A549 (cell line): ENCODE measurements at regions of chr19 and their contacts with region 1.

Region 1: DNA sequence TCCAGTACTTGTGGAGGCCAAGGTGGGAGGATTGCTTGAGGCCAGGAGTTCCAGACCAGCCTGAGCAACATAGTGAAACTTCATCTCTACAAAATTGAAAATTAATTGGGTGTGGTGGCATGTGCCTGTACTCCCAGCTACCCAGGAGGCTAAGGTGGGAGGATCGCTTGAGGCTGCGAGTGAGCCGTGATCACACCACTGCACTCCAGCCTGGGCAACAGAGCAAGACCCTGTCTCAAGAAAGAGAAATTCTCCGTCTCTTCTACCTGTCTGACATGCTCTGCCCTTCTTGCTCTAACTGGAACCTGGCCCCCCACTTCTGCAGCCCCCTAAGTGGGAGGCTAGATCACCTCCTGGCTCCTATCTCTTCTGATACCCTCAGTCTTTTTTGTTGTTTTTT is 7.4 kb downstream of the EIF3K start:
- DNase-seq: no peak
- ATAC-seq: no peak
- H3K4me3 ChIP-seq: no peak overlapping the region
- H3K27ac ChIP-seq: no peak overlapping the region
- H3K4me1 ChIP-seq: peaks cover 23% of the 10 kb centered on the region
- CTCF ChIP-seq: no peak
- EP300 ChIP-seq: no peak
- POLR2A ChIP-seq: no peak
- RAD21 ChIP-seq: no peak

Region 2: GRCh38 chr19:38524369-38524768 is 102.0 kb before region 1 on chr19:
- CTCF ChIA-PET with region 1: no interaction called
- POLR2A ChIA-PET with region 1: no interaction called
- DNase-seq: no peak
- ATAC-seq: peak; percentile 9 to 10; a peak in 1 of 6 replicates
- H3K4me3 ChIP-seq: no peak overlapping the region
- H3K27ac ChIP-seq: no peak overlapping the region
- H3K4me1 ChIP-seq: peaks cover 5% of the 10 kb centered on the region; the same call in 2 of the 3 replicates
- CTCF ChIP-seq: no peak
- EP300 ChIP-seq: no peak
- POLR2A ChIP-seq: no peak
- RAD21 ChIP-seq: no peak

Region 3: DNA sequence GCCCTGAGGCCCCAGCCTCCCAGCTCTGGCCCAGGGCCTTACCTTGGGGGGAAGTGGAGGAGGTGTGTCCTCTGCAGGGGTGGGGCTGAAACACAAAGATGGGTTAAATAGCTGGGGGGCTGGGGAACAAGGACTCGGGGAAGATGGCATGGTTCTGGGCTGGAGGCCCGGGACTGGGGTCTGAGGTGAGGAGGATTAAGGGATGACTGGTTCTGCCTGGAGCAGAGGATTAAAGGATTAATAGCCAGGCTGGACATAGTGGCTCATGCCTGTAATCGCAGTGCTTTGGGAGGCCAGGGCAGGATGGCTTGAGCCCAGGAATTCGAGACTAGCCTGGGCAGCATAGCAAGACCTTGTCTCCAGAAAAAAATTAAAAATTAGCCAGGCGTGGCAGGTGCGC is 20.3 kb before region 1 on chr19:
- CTCF ChIA-PET with region 1: no interaction called
- POLR2A ChIA-PET with region 1: no interaction called
- DNase-seq: no peak
- ATAC-seq: peak; percentile 14 to 29; a peak in 3 of 6 replicates
- H3K4me3 ChIP-seq: no peak overlapping the region
- H3K27ac ChIP-seq: no peak overlapping the region
- H3K4me1 ChIP-seq: no peaks in the 10 kb centered on the region; the same call in 2 of the 3 replicates
- CTCF ChIP-seq: no peak
- EP300 ChIP-seq: no peak
- POLR2A ChIP-seq: no peak
- RAD21 ChIP-seq: no peak

Region 4: GRCh38 chr19:38640368-38640767 is 14.0 kb after region 1 on chr19:
- CTCF ChIA-PET with region 1: interaction called, 134 read pairs
- POLR2A ChIA-PET with region 1: interaction called, 3 read pairs
- DNase-seq: no peak
- ATAC-seq: 0 out of 6 replicates have a peak, but pooled peaks of 1 of the 2 experiments have one; percentile 9
- H3K4me3 ChIP-seq: no peak overlapping the region
- H3K27ac ChIP-seq: peak overlapping the region in 1 of 2 experiments; percentile 56; a peak in 3 of 6 replicates
- H3K4me1 ChIP-seq: peaks cover 47% of the 10 kb centered on the region
- CTCF ChIP-seq: no peak
- EP300 ChIP-seq: no peak
- POLR2A ChIP-seq: no peak
- RAD21 ChIP-seq: no peak

Region 5: DNA sequence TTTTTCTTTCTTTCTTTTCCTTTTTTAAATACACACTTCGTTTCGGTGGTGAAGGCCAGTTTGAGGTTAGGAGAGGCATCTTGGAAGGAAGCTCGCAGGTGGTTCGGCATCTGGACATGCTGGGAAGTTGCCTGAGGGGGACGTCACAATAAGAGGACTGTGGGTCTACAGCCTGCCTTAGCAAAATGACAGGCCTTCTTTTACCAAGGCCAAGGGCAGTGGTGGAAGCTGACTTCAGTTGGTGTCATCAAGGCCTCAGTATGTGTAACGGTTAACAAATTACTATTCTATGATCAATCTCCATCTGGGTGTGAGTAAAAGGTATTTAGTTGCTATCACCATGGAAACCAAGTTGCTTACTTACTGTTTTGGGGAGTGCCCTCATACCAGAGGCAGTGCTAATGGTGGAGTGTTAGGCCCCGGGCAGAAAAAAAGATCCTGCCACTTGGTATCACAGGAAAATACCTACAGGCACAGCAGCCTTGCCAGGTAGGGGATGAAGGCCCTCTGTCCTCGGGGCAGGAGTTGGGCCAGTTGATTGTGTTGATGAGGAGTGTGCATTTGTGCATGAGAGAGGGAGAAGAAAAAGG is 31.3 kb after region 1 on chr19:
- CTCF ChIA-PET with region 1: no interaction called
- POLR2A ChIA-PET with region 1: no interaction called
- DNase-seq: peak; percentile 95 to 96
- ATAC-seq: peak; percentile 65 to 70
- H3K4me3 ChIP-seq: peak overlapping the region; percentile 12
- H3K27ac ChIP-seq: peak overlapping the region; percentile 87 to 91
- H3K4me1 ChIP-seq: peaks cover 98% of the 10 kb centered on the region
- CTCF ChIP-seq: no peak
- EP300 ChIP-seq: peak in 1 of 2 experiments; percentile 46; a peak in 1 of 5 replicates
- POLR2A ChIP-seq: no peak
- RAD21 ChIP-seq: no peak

Region 6: GRCh38 chr19:38784224-38784623 is 157.8 kb after region 1 on chr19:
- CTCF ChIA-PET with region 1: no interaction called
- POLR2A ChIA-PET with region 1: no interaction called
- DNase-seq: peak; percentile 80 to 81
- ATAC-seq: peak; percentile 61; a peak in 4 of 6 replicates
- H3K4me3 ChIP-seq: no peak overlapping the region
- H3K27ac ChIP-seq: peak overlapping the region; percentile 22 to 59
- H3K4me1 ChIP-seq: peaks cover 19% of the 10 kb centered on the region
- CTCF ChIP-seq: no peak
- EP300 ChIP-seq: no peak
- POLR2A ChIP-seq: no peak
- RAD21 ChIP-seq: no peak